Activated naive CD4-positive, alpha-beta T cell treated with anti-CD3 and anti-CD28 coated beads for 36 hours (primary cell): ENCODE measurements at regions of chr16 and their contacts with region 1.

Region 1: GRCh38 chr16:85986931-85987749 is 88.2 kb downstream of the IRF8 start:
- DNase-seq: peak; percentile 58
- H3K4me3 Mint-ChIP-seq: no peak overlapping the region
- H3K27ac Mint-ChIP-seq: peak overlapping the region; percentile 96
- H3K4me1 Mint-ChIP-seq: peaks cover 80% of the 10 kb centered on the region
- H3K27me3 Mint-ChIP-seq: peaks cover 6% of the 10 kb centered on the region

Region 2: GRCh38 chr16:85652431-85653221 is 334.5 kb before region 1 on chr16:
- CTCF ChIA-PET with region 1: no interaction called
- intact Hi-C with region 1: no loop called
- DNase-seq: peak; percentile 14
- H3K4me3 Mint-ChIP-seq: no peak overlapping the region
- H3K27ac Mint-ChIP-seq: no peak overlapping the region
- H3K4me1 Mint-ChIP-seq: no peaks in the 10 kb centered on the region
- H3K27me3 Mint-ChIP-seq: no peaks in the 10 kb centered on the region

Region 3: GRCh38 chr16:85688586-85689284 is 298.4 kb before region 1 on chr16 and contains the start of gene GINS2:
- CTCF ChIA-PET with region 1: no interaction called
- intact Hi-C with region 1: loop called (anchors 2 kb)
- DNase-seq: peak; percentile 93
- H3K4me3 Mint-ChIP-seq: peak within 1 kb of the TSS; percentile 84
- H3K27ac Mint-ChIP-seq: peak within 1 kb of the TSS; percentile 66
- H3K4me1 Mint-ChIP-seq: peaks cover 21% of the 10 kb centered on the region
- H3K27me3 Mint-ChIP-seq: peaks cover 2% of the 10 kb centered on the region
- total RNA-seq, gene GINS2: 60.7 to 66.6 TPM

Region 4: GRCh38 chr16:85888405-85889331 is 98.5 kb before region 1 on chr16:
- CTCF ChIA-PET with region 1: interaction called, 14 read pairs
- intact Hi-C with region 1: loop called (anchors 1 kb)
- DNase-seq: peak; percentile 73
- H3K4me3 Mint-ChIP-seq: no peak overlapping the region
- H3K27ac Mint-ChIP-seq: peak overlapping the region; percentile 85
- H3K4me1 Mint-ChIP-seq: peaks cover 44% of the 10 kb centered on the region
- H3K27me3 Mint-ChIP-seq: peaks cover 13% of the 10 kb centered on the region

Region 5: GRCh38 chr16:85928401-85928820 is 58.7 kb before region 1 on chr16:
- CTCF ChIA-PET with region 1: interaction called, 24 read pairs
- intact Hi-C with region 1: no loop called
- DNase-seq: no peak
- H3K4me3 Mint-ChIP-seq: peak overlapping the region; percentile 19
- H3K27ac Mint-ChIP-seq: no peak overlapping the region
- H3K4me1 Mint-ChIP-seq: peaks cover 58% of the 10 kb centered on the region
- H3K27me3 Mint-ChIP-seq: no peaks in the 10 kb centered on the region

Region 6: GRCh38 chr16:85947230-85948137 is 39.7 kb before region 1 on chr16:
- CTCF ChIA-PET with region 1: interaction called, 6 read pairs
- intact Hi-C with region 1: loop called (anchors 1 kb)
- DNase-seq: peak; percentile 89
- H3K4me3 Mint-ChIP-seq: peak overlapping the region; percentile 38
- H3K27ac Mint-ChIP-seq: peak overlapping the region; percentile 84
- H3K4me1 Mint-ChIP-seq: peaks cover 70% of the 10 kb centered on the region
- H3K27me3 Mint-ChIP-seq: peaks cover 3% of the 10 kb centered on the region

Region 7: DNA sequence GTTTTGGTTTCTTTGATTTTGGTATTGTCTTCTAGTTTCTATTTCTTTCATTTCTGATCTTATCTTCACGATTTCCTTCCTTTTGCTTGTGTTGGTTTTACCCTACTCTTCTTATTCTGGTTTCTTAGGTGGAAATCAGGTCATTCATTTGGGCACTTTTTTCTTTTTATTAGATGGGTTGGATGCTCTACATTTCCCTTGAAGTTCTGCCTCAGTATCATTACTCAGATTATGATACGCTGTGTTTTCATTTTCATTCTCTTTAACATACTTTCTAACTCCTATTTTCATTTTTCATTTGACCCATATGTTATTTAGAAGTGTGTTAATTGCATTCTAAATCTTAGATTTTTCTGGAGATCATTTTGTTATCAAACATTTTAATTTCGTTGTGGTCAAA is 20.4 kb after region 1 on chr16:
- CTCF ChIA-PET with region 1: interaction called, 8 read pairs
- intact Hi-C with region 1: loop called (anchors 1 kb)
- DNase-seq: no peak
- H3K4me3 Mint-ChIP-seq: peak overlapping the region; percentile 5
- H3K27ac Mint-ChIP-seq: peak overlapping the region; percentile 57
- H3K4me1 Mint-ChIP-seq: peaks cover 35% of the 10 kb centered on the region
- H3K27me3 Mint-ChIP-seq: no peaks in the 10 kb centered on the region

Region 8: GRCh38 chr16:86033016-86033474 is 45.9 kb after region 1 on chr16:
- CTCF ChIA-PET with region 1: no interaction called
- intact Hi-C with region 1: no loop called
- DNase-seq: no peak
- H3K4me3 Mint-ChIP-seq: no peak overlapping the region
- H3K27ac Mint-ChIP-seq: no peak overlapping the region
- H3K4me1 Mint-ChIP-seq: no peaks in the 10 kb centered on the region
- H3K27me3 Mint-ChIP-seq: peaks cover 7% of the 10 kb centered on the region

Region 9: GRCh38 chr16:86261379-86261778 is 274.2 kb after region 1 on chr16:
- CTCF ChIA-PET with region 1: no interaction called
- intact Hi-C with region 1: no loop called
- DNase-seq: no peak
- H3K4me3 Mint-ChIP-seq: no peak overlapping the region
- H3K27ac Mint-ChIP-seq: no peak overlapping the region
- H3K4me1 Mint-ChIP-seq: no peaks in the 10 kb centered on the region
- H3K27me3 Mint-ChIP-seq: peaks cover 21% of the 10 kb centered on the region